Endothelial cell of umbilical vein (primary cell): ENCODE measurements at regions of chr1 and their contacts with region 1.

Region 1: GRCh38 chr1:53014791-53015507 is 47.1 kb upstream of the PODN start:
- DNase-seq: peak; percentile 86
- H3K4me3 ChIP-seq: peak overlapping the region; percentile 59 to 78 (median 73)
- H3K27ac ChIP-seq: no peak overlapping the region
- H3K4me1 ChIP-seq: peaks cover 7% of the 10 kb centered on the region
- H3K27me3 ChIP-seq: no peaks in the 10 kb centered on the region
- CTCF ChIP-seq: no peak
- POLR2A ChIP-seq: peak; percentile 37

Region 2: GRCh38 chr1:52927212-52928014 is 87.5 kb before region 1 on chr1 and contains the start of gene SCP2:
- CTCF ChIA-PET with region 1: no interaction called
- POLR2A ChIA-PET with region 1: no interaction called
- dilution Hi-C with region 1: no loop called
- intact Hi-C with region 1: loop called (anchors 2 kb)
- DNase-seq: peak; percentile 68
- H3K4me3 ChIP-seq: peak within 1 kb of the TSS; percentile 54 to 75 (median 57)
- H3K27ac ChIP-seq: no peak within 1 kb of the TSS
- H3K4me1 ChIP-seq: peaks cover 3% of the 10 kb centered on the region
- H3K27me3 ChIP-seq: no peaks in the 10 kb centered on the region
- CTCF ChIP-seq: no peak
- POLR2A ChIP-seq: peak; percentile 78
- total RNA-seq, gene SCP2: 92.7 and 101 TPM in 2 replicates

Region 3: DNA sequence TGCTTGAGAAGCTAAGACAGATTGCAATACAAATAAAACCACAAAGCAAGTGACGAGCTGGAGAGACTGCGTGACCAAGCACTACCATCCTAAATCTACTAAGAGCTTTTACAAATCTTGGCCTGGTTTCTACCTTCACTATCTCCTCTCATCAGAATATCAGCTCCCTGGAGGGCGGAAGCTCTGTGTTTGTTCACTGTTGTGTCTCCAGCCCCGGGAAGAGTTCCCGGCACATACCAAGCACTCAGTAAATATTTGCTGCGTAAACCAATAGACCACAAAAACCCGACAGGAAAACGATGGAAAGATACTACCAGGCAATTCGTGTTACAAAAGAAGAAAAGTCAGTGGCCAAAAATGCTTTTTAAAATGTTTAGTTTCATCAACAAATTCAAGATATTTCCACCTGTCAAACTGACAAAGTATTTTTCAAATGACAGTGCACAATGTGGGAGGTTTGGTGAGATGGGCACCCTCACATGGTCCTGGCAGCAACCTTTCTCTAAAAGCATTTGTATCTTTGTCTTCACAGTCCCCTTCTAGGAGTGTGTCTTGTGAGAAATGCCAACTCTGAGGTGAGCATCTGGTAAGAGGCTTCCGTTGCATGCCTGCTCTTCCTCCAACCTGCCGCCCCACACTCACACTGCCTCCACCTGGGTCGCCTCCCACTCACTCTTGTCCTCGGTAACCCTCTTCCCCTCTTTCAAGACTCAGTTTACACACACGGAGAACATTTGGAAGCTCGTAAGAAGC is 92.8 kb after region 1 on chr1:
- CTCF ChIA-PET with region 1: no interaction called
- POLR2A ChIA-PET with region 1: no interaction called
- dilution Hi-C with region 1: no loop called
- intact Hi-C with region 1: no loop called
- DNase-seq: no peak
- H3K4me3 ChIP-seq: no peak overlapping the region
- H3K27ac ChIP-seq: no peak overlapping the region
- H3K4me1 ChIP-seq: no peaks in the 10 kb centered on the region
- H3K27me3 ChIP-seq: no peaks in the 10 kb centered on the region
- CTCF ChIP-seq: no peak
- POLR2A ChIP-seq: no peak